ENCODE measurements at regions of chr10 and their contacts with region 1.

Region 1: DNA sequence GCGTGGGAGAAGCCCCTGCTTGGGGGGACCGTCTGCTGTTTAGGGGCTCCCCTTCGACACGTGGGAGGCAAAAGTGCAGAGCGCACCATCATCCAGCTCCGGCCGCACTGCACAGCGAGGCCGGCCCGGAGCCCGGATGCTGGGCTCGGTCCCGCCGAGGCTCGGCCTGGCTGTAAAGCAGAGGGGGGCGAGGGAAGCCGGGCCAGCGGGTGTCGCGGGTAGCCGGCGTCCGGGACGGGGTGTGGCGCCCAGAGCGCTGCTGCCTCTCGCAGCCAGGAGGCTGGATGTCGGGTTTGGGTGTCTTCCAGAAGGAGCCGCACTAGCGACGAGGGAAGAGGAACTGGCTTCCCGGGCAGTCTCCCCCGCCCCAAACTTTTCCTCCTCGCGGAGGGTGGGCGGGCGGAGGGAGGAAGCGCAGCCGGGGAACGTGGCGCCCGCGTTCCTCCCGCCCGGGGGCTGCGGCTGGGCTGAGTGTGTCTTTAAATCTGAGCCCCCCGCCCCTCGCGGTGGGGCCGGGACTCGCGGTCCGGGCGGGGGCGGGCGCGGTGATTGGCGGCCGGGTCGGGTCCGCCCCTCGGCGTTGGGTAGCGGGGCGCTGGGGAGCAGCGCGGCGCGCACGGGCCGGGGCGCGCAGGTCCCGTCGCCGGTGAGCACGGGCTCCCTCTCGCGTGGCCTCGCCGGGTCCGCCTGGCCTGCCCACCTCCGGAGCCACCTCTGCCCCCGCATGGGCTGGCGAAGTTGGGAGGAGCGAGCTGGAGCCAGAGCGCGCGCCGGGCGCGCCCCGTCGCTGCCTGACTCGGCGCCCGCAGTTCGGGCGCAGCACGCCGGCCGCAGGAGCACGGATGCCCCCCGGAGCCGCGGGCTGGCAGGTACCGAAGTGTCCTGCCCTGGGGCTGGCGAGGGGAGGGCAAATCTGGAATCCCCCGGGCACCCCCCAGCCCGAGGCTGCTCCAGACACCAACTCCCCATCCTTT is at the start of gene PALD1:
- DNase-seq: peak; percentile 85 to 89 (median 87)
- ATAC-seq: peak; percentile 26 to 68 (median 61)
- H3K4me3 ChIP-seq: peak within 1 kb of the TSS; percentile 56 to 84 (median 66)
- H3K27ac ChIP-seq: peak within 1 kb of the TSS; percentile 61 to 89 (median 76)
- H3K4me1 ChIP-seq: peaks cover 12 to 63% (median 52%) of the 10 kb centered on the region in 12 donors
- H3K27me3 ChIP-seq: peaks cover 0 to 2% (median 0%) of the 10 kb centered on the region in 9 donors
- CTCF ChIP-seq: peak in 9 of 12 donors; percentile 23 to 60 (median 40)
- POLR2A ChIP-seq: peak in 1 of 2 donors; percentile 23
- total RNA-seq, gene PALD1: 3.2 to 12.3 (median 6.7) TPM

Region 2: GRCh38 chr10:70500812-70501301 is 22.4 kb after region 1 on chr10:
- intact Hi-C with region 1: loop called in 1 of 10 experiments (anchors 2 kb)
- DNase-seq: peak in 4 of 5 donors; percentile 61 to 76 (median 72)
- ATAC-seq: peak; percentile 77 to 94 (median 78)
- H3K4me3 ChIP-seq: no peak overlapping the region
- H3K27ac ChIP-seq: peak overlapping the region; percentile 34 to 81 (median 51)
- H3K4me1 ChIP-seq: peaks cover 0 to 59% (median 27%) of the 10 kb centered on the region in 12 donors
- H3K27me3 ChIP-seq: no peaks in the 10 kb centered on the region
- CTCF ChIP-seq: no peak
- POLR2A ChIP-seq: no peak

Region 3: GRCh38 chr10:70513848-70514309 is 35.4 kb after region 1 on chr10:
- intact Hi-C with region 1: loop called in 2 of 10 experiments (anchors 5 kb)
- DNase-seq: peak in 1 of 5 donors; percentile 22
- ATAC-seq: no peak
- H3K4me3 ChIP-seq: no peak overlapping the region
- H3K27ac ChIP-seq: no peak overlapping the region
- H3K4me1 ChIP-seq: peaks cover 16 to 69% (median 54%) of the 10 kb centered on the region in 12 donors
- H3K27me3 ChIP-seq: no peaks in the 10 kb centered on the region
- CTCF ChIP-seq: no peak
- POLR2A ChIP-seq: no peak